Caco-2 (cell line): ENCODE measurements at regions of chr1 and their contacts with region 1.

Region 1: GRCh38 chr1:163315773-163316374 is 5.9 kb upstream of the NUF2 start:
- DNase-seq: peak in 1 of 2 experiments; percentile 38
- H3K4me3 ChIP-seq: no peak overlapping the region
- H3K4me3 Mint-ChIP-seq: no peak overlapping the region
- H3K27ac Mint-ChIP-seq: no peak overlapping the region
- H3K4me1 ChIP-seq: peaks cover 4% of the 10 kb centered on the region; the same call in 1 of the 2 replicates
- H3K4me1 Mint-ChIP-seq: peaks cover 4% of the 10 kb centered on the region
- H3K27me3 ChIP-seq: no peaks in the 10 kb centered on the region
- H3K27me3 Mint-ChIP-seq: no peaks in the 10 kb centered on the region
- CTCF ChIP-seq: peak; percentile 46 to 69

Region 2: DNA sequence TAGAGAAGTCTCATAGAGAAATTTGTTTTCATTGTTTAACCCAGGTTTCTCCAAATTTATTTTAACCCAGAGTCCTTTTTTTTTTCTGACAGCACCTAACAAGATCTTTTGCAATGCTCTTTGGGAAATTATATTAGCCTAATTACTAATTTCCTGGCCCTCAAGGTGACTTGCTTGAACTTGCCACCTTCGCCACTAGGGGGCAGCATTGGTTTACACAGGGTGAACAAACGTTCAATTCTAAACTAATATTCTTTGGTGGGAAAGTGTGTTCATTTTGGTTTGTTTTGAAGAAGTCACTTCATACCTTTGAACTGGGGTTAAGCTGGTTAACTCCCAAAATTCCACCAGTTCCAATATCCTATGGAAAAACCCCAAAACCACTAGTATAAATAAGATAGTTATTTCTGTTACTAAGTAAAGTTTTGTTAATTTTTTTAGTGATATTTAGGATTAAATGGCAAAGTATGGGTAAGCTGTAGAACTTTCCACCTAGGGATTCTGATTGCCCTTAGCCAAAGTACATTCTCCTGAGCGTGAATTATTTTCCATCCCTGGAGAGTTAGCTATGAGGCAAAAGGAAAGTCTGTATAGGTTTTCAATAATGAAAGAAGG is 467.9 kb before region 1 on chr1:
- CTCF ChIA-PET with region 1: no interaction called
- POLR2A ChIA-PET with region 1: no interaction called
- intact Hi-C with region 1: loop called (anchors 1 kb)
- DNase-seq: peak; percentile 65 to 81
- H3K4me3 ChIP-seq: no peak overlapping the region
- H3K4me3 Mint-ChIP-seq: no peak overlapping the region
- H3K27ac Mint-ChIP-seq: no peak overlapping the region
- H3K4me1 ChIP-seq: no peaks in the 10 kb centered on the region
- H3K4me1 Mint-ChIP-seq: no peaks in the 10 kb centered on the region
- H3K27me3 ChIP-seq: no peaks in the 10 kb centered on the region
- H3K27me3 Mint-ChIP-seq: peaks cover 3% of the 10 kb centered on the region
- CTCF ChIP-seq: peak; percentile 86 to 87

Region 3: GRCh38 chr1:162854245-162854882 is 461.5 kb before region 1 on chr1:
- CTCF ChIA-PET with region 1: interaction called, 4 read pairs
- POLR2A ChIA-PET with region 1: no interaction called
- intact Hi-C with region 1: loop called (anchors 1 kb)
- DNase-seq: peak; percentile 64 to 68
- H3K4me3 ChIP-seq: no peak overlapping the region
- H3K4me3 Mint-ChIP-seq: no peak overlapping the region
- H3K27ac Mint-ChIP-seq: no peak overlapping the region
- H3K4me1 ChIP-seq: no peaks in the 10 kb centered on the region
- H3K4me1 Mint-ChIP-seq: no peaks in the 10 kb centered on the region
- H3K27me3 ChIP-seq: no peaks in the 10 kb centered on the region
- H3K27me3 Mint-ChIP-seq: peaks cover 3% of the 10 kb centered on the region
- CTCF ChIP-seq: peak; percentile 52 to 78

Region 4: GRCh38 chr1:163071405-163072255 is 244.2 kb before region 1 on chr1:
- CTCF ChIA-PET with region 1: interaction called, 9 read pairs
- POLR2A ChIA-PET with region 1: no interaction called
- intact Hi-C with region 1: loop called (anchors 1 kb)
- DNase-seq: peak; percentile 67 to 69
- H3K4me3 ChIP-seq: no peak overlapping the region
- H3K4me3 Mint-ChIP-seq: no peak overlapping the region
- H3K27ac Mint-ChIP-seq: no peak overlapping the region
- H3K4me1 ChIP-seq: peaks cover 3% of the 10 kb centered on the region; the same call in 1 of the 2 replicates
- H3K4me1 Mint-ChIP-seq: no peaks in the 10 kb centered on the region
- H3K27me3 ChIP-seq: no peaks in the 10 kb centered on the region
- H3K27me3 Mint-ChIP-seq: peaks cover 13% of the 10 kb centered on the region
- CTCF ChIP-seq: peak; percentile 69 to 82

Region 5: GRCh38 chr1:163174524-163175437 is 141.1 kb before region 1 on chr1:
- CTCF ChIA-PET with region 1: no interaction called
- POLR2A ChIA-PET with region 1: no interaction called
- intact Hi-C with region 1: loop called (anchors 2 kb)
- DNase-seq: peak; percentile 34 to 55
- H3K4me3 ChIP-seq: no peak overlapping the region
- H3K4me3 Mint-ChIP-seq: no peak overlapping the region
- H3K27ac Mint-ChIP-seq: no peak overlapping the region
- H3K4me1 ChIP-seq: no peaks in the 10 kb centered on the region
- H3K4me1 Mint-ChIP-seq: no peaks in the 10 kb centered on the region
- H3K27me3 ChIP-seq: no peaks in the 10 kb centered on the region
- H3K27me3 Mint-ChIP-seq: peaks cover 3% of the 10 kb centered on the region
- CTCF ChIP-seq: peak; percentile 82 to 84